Panc1 (cell line): ENCODE measurements at regions of chr1 and their contacts with region 1.

Region 1: GRCh38 chr1:25927521-25928265 is 21.5 kb upstream of the STMN1 start:
- DNase-seq: no peak
- ATAC-seq: no peak
- H3K4me3 ChIP-seq: no peak overlapping the region
- H3K27ac ChIP-seq: no peak overlapping the region
- H3K4me1 ChIP-seq: peaks cover 7% of the 10 kb centered on the region; the same call in 1 of the 2 replicates
- H3K27me3 ChIP-seq: no peaks in the 10 kb centered on the region
- CTCF ChIP-seq: no peak

Region 2: GRCh38 chr1:26003727-26004126 is 76.0 kb after region 1 on chr1:
- CTCF ChIA-PET with region 1: no interaction called
- POLR2A ChIA-PET with region 1: interaction called, 12 read pairs
- in situ Hi-C with region 1: no loop called
- intact Hi-C with region 1: no loop called
- DNase-seq: no peak
- ATAC-seq: no peak
- H3K4me3 ChIP-seq: no peak overlapping the region
- H3K27ac ChIP-seq: no peak overlapping the region
- H3K4me1 ChIP-seq: peaks cover under 1% of the 10 kb centered on the region
- H3K27me3 ChIP-seq: no peaks in the 10 kb centered on the region
- CTCF ChIP-seq: no peak